ENCODE measurements at regions of chr15 and their contacts with region 1.

Region 1: GRCh38 chr15:101277038-101277882 is at the start of gene SELENOS:
- DNase-seq: peak; percentile 90
- H3K4me3 Mint-ChIP-seq: peak within 1 kb of the TSS; percentile 92
- H3K27ac Mint-ChIP-seq: peak within 1 kb of the TSS; percentile 81
- H3K4me1 Mint-ChIP-seq: peaks cover 29% of the 10 kb centered on the region
- H3K27me3 Mint-ChIP-seq: no peaks in the 10 kb centered on the region
- total RNA-seq, gene SELENOS: 30.9 to 31.7 TPM

Region 2: DNA sequence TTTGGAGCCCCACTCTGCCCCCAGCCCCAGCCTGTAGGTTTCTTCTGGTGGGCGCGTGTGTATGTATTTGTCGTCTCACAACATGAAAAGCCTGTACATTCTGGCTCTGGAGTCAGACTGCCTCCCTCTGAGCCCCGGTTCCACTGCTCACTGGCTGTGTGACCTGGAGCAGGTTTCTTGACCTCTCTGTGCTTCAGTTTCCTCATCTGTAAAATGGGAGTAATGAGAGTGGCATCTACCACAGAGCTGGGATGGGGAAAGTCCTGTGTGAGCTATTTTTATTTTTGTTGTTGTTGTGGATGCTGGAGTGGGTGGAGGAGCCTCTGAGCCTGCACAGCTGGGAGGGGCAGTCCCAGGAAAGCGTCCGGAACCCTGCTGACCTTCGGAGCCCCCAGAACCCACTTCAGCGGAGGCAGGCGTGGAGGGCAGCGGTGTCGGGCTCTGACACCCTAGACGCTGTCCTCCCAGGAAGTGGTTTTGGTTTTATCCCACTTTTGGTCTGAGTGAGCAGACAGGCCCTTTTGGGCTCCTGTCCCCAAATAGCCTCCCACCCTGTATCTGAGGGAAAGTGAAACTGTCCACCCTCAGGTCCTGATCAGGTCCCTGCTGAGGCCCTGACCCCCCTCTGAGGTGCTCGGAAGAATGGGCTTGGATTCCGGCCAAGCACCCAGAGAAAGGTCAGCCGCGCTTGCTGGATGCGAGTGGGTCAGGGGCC is 128.9 kb before region 1 on chr15:
- CTCF ChIA-PET with region 1: no interaction called
- POLR2A ChIA-PET with region 1: no interaction called
- intact Hi-C with region 1: no loop called
- DNase-seq: no peak
- H3K4me3 Mint-ChIP-seq: no peak overlapping the region
- H3K27ac Mint-ChIP-seq: no peak overlapping the region
- H3K4me1 Mint-ChIP-seq: peaks cover 6% of the 10 kb centered on the region
- H3K27me3 Mint-ChIP-seq: peaks cover 3% of the 10 kb centered on the region

Region 3: DNA sequence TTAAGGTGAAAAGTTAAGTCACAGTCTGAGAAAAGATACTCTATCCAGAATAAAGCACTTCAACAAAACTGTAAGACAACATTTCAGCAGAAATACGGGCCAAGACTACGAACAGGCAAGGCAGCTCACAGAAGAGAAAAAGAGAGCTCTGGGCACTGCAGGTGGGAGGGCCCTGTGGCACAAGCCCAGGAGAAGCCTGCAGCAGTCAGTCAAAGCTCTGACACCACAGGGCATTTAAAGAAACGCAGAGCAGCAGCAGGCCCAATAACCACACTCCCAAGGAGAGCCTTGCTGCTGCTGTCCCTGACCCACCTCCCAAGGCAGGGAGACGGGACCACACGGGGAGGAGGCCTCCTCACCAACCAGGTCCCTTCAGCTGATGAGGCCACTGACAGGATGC is 44.6 kb before region 1 on chr15:
- CTCF ChIA-PET with region 1: no interaction called
- POLR2A ChIA-PET with region 1: no interaction called
- intact Hi-C with region 1: no loop called
- DNase-seq: no peak
- H3K4me3 Mint-ChIP-seq: no peak overlapping the region
- H3K27ac Mint-ChIP-seq: no peak overlapping the region
- H3K4me1 Mint-ChIP-seq: peaks cover 25% of the 10 kb centered on the region
- H3K27me3 Mint-ChIP-seq: no peaks in the 10 kb centered on the region

Region 4: DNA sequence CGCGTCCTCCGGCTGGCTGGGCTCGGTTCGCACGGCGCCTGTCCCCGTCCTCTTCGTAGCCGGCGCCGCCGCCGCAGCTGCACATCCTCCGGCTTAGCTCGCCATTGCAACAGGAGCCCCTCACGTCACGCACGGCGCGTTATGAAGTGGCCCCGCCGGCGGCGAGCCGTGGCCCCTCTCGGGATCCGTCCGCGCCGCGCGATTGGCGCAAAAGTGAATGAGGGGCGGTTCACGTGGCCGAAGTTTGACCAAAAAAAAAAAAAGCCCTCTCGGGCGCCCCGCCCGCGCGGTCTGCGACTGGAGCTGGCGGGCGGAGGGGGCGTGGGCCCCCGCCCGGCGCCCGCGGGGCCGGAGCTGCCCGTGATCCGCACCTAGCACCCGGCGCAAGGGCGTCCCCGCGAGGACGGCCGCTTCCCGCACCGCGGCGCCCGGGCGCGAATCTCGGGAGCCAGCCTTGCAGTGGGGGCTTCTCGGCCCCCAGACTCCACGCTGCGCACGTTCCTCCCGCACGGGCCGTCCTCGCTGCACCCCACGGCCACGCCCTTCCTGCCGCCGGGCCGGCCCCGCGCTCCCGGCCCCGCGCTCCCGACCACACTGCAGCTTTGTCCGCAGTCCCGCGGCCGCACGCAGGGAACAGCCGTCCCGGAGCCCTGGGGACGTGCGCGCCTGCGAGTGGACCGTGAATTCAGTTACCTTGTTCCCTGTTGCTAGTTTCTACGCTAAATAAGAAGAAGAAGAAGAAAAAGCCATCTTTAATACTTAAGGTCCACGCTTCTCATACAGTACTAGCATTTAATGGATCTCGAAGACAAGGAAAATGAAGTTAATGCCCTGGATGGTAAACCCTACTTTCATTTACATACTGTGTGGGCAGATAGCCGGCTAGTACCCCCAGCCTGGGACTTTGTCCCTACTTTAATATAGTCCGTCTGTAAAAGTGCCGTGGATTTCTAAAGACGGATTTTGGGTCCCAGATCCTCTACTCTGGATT is 25.1 kb before region 1 on chr15 and contains the start of gene CHSY1:
- CTCF ChIA-PET with region 1: no interaction called
- POLR2A ChIA-PET with region 1: no interaction called
- intact Hi-C with region 1: no loop called
- DNase-seq: peak; percentile 91
- H3K4me3 Mint-ChIP-seq: peak within 1 kb of the TSS; percentile 91
- H3K27ac Mint-ChIP-seq: peak within 1 kb of the TSS; percentile 86
- H3K4me1 Mint-ChIP-seq: peaks cover 51% of the 10 kb centered on the region
- H3K27me3 Mint-ChIP-seq: no peaks in the 10 kb centered on the region
- total RNA-seq, gene CHSY1: 34.8 to 36.3 TPM

Region 5: GRCh38 chr15:101288908-101289513 is 11.8 kb after region 1 on chr15:
- CTCF ChIA-PET with region 1: interaction called, 24 read pairs
- POLR2A ChIA-PET with region 1: interaction called, 4 read pairs
- intact Hi-C with region 1: loop called (anchors 1 kb)
- DNase-seq: peak; percentile 6
- H3K4me3 Mint-ChIP-seq: no peak overlapping the region
- H3K27ac Mint-ChIP-seq: peak overlapping the region; percentile 55
- H3K4me1 Mint-ChIP-seq: peaks cover 51% of the 10 kb centered on the region
- H3K27me3 Mint-ChIP-seq: no peaks in the 10 kb centered on the region

Region 6: DNA sequence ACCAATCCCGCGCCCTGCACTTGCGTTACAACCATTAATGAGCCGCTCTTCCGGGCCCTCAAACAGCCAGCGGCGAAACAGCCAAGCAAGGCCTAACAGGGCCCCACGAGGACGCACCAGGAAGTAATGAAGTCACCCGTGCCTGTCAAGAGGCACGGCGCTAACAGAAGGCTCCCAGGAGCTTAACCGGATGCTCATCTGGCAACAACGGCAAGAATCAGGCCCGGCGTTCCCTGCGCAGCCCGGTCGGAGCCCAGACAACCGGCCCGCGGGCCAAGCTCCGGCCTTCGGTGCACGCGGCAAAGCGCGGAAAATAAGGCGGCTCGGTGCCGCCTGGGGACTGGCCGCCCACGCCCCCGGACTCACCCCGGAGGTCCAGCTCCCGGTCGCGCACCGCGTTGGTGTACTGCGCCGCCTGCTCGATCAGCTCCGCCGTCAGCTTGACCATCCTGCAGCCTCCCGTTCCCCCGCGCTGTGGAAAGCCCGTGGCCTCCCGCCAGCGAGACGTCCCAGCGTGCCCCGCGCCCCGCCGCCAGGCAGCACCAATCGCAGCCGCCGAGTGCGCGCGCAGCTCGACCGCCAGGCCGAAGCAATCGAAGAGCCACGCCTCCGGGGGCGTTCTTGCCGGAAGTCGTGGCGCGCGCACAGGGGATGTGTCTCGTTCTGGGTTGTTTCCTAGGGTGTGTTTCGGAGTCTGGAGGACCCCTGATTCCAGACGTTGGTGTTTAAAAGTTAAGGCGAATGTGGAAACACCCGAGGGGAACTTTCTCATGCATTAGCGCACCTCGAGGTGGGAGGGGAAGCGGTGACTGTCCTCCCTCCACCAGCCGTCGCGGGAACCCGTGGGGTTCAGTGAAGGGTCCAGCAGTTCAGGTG is 17.7 kb after region 1 on chr15 and contains the start of gene SNRPA1:
- CTCF ChIA-PET with region 1: interaction called, 24 read pairs
- POLR2A ChIA-PET with region 1: interaction called, 5 read pairs
- intact Hi-C with region 1: loop called (anchors 1 kb)
- DNase-seq: peak; percentile 98
- H3K4me3 Mint-ChIP-seq: peak within 1 kb of the TSS; percentile 95
- H3K27ac Mint-ChIP-seq: peak within 1 kb of the TSS; percentile 98
- H3K4me1 Mint-ChIP-seq: peaks cover 38% of the 10 kb centered on the region
- H3K27me3 Mint-ChIP-seq: no peaks in the 10 kb centered on the region
- total RNA-seq, gene SNRPA1: 167 to 173 TPM

Measured in activated CD4-positive, alpha-beta memory T cell treated with anti-CD3 and anti-CD28 coated beads for 36 hours (primary cell).